ENCODE measurements at regions of chr19 and their contacts with region 1.

Region 1: GRCh38 chr19:796692-797527 is at the start of gene PTBP1:
- DNase-seq: peak; percentile 100
- H3K4me3 Mint-ChIP-seq: peak within 1 kb of the TSS; percentile 88
- H3K27ac Mint-ChIP-seq: peak within 1 kb of the TSS; percentile 88
- H3K4me1 Mint-ChIP-seq: peaks cover 28% of the 10 kb centered on the region
- H3K27me3 Mint-ChIP-seq: no peaks in the 10 kb centered on the region
- total RNA-seq, gene PTBP1: 510 to 532 TPM

Region 2: GRCh38 chr19:506404-507285 is 290.3 kb before region 1 on chr19:
- CTCF ChIA-PET with region 1: no interaction called
- intact Hi-C with region 1: loop called (anchors 1 kb)
- DNase-seq: peak; percentile 96
- H3K4me3 Mint-ChIP-seq: peak overlapping the region; percentile 83
- H3K27ac Mint-ChIP-seq: peak overlapping the region; percentile 99
- H3K4me1 Mint-ChIP-seq: peaks cover 38% of the 10 kb centered on the region
- H3K27me3 Mint-ChIP-seq: no peaks in the 10 kb centered on the region

Region 3: DNA sequence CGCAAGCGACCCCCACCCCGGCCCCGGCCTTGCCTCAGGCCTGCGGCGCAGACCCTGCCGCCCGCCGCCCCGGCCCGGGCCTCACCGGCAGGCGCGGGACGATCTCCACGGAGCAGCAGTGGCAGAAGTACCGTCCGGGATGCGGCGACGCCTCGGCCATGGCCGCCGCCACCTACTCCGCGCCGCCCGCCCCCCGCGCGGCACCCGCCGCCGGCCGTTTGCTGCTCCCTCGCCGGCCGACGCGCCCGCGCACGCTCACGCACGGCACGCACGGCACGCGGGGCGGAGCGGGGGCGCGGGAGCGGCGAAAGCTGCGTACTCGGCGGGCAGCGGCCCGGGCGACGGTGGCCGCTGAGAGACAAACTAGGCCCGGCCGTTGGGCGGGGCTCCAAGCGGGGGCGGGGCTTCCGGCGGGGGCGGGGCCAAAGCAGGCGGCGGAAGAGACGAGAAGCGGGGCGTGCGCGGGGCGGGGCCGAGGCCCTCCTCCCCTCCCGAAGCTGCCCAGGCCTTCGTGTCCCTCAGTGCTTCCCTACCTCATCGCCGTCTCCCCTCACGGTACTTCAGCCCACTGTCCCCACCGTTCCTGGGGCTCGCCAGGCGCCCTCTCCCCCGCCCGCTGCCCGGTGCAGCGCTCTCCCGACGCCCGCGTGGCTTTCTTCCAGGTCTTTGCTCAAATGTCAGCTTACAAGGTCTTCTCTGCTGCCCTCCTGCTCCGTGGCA is 133.8 kb before region 1 on chr19 and contains the start of gene RNF126:
- CTCF ChIA-PET with region 1: no interaction called
- intact Hi-C with region 1: loop called (anchors 1 kb)
- DNase-seq: peak; percentile 95
- H3K4me3 Mint-ChIP-seq: peak within 1 kb of the TSS; percentile 99
- H3K27ac Mint-ChIP-seq: peak within 1 kb of the TSS; percentile 98
- H3K4me1 Mint-ChIP-seq: peaks cover 40% of the 10 kb centered on the region
- H3K27me3 Mint-ChIP-seq: no peaks in the 10 kb centered on the region
- total RNA-seq, gene RNF126: 99.5 to 108 TPM

Region 4: DNA sequence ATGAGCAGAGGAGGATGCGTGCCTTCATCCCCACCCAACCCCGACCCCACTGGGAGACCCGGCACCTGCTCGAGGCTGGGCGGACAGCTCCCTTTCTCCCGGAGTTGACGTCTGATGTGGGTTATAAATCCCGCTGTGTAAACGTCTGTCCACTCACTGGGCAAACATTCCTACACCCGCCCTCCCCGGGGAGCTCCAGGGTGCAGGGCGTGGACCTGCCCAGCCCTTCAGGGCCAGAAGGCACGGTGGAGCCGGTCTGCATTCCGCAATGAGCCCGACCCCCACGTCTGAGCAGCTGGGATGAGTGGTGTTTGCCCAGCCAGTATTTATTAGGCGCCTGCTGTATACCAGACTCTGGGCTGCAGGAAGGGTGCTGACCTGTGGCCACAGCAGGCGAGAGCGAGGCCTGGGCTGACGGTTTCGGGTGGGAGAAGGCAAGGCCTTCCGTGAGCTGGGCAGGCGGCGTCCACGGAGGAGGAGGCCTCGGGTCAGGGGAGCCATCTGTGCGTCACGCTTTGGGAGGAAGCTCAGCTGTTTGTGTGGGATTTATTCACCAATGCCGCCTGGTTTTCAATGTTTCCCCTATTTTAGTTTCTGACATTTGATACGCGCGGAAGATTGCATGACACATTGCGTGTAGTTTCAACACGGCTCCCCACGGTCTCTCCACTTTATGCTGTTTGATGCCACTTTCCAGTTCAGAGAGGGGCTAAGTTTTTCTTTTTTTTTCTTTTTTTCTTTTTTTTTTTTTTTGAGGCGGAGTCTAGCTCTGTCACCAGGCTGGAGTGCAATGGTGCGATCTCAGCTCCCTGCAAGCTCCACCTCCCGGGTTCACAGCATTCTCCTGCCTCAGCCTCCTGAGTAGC is 44.0 kb before region 1 on chr19:
- CTCF ChIA-PET with region 1: no interaction called
- intact Hi-C with region 1: no loop called
- DNase-seq: no peak
- H3K4me3 Mint-ChIP-seq: no peak overlapping the region
- H3K27ac Mint-ChIP-seq: no peak overlapping the region
- H3K4me1 Mint-ChIP-seq: no peaks in the 10 kb centered on the region
- H3K27me3 Mint-ChIP-seq: no peaks in the 10 kb centered on the region

Region 5: DNA sequence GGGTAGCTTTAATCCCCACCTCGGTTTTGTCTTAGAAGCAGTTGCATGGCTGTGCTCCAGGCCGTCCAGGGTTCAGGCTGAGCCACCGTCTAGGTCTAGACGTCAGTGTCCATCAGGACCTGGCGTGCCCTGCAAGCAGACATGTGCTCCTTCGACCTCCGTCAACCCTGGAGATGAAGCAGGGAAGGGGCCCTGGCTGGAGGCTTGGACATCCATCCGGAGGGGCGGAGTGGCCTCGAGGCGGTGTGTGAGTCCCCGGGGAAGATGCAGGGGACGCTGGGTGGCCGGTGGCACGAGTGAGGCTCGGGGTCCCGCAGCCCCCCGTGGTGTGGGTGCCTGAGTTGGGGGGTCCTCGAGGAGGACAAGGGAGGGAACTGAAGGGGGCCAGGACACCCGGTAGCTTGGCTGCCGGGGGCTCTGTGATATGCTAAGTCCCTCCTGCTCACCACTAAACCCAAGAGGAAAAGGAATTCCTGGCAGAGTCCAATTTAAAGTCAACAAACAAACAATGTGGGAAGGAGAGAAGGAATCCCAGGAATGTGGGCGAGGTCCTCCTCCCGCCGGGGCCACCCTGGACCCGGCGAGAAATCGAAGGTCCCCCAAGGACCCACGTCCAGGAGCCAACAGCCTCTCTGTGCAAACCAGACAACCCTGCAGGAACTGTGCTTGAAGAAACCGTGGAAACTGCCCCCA is 14.6 kb before region 1 on chr19:
- CTCF ChIA-PET with region 1: no interaction called
- intact Hi-C with region 1: no loop called
- DNase-seq: no peak
- H3K4me3 Mint-ChIP-seq: no peak overlapping the region
- H3K27ac Mint-ChIP-seq: no peak overlapping the region
- H3K4me1 Mint-ChIP-seq: no peaks in the 10 kb centered on the region
- H3K27me3 Mint-ChIP-seq: no peaks in the 10 kb centered on the region

Region 6: DNA sequence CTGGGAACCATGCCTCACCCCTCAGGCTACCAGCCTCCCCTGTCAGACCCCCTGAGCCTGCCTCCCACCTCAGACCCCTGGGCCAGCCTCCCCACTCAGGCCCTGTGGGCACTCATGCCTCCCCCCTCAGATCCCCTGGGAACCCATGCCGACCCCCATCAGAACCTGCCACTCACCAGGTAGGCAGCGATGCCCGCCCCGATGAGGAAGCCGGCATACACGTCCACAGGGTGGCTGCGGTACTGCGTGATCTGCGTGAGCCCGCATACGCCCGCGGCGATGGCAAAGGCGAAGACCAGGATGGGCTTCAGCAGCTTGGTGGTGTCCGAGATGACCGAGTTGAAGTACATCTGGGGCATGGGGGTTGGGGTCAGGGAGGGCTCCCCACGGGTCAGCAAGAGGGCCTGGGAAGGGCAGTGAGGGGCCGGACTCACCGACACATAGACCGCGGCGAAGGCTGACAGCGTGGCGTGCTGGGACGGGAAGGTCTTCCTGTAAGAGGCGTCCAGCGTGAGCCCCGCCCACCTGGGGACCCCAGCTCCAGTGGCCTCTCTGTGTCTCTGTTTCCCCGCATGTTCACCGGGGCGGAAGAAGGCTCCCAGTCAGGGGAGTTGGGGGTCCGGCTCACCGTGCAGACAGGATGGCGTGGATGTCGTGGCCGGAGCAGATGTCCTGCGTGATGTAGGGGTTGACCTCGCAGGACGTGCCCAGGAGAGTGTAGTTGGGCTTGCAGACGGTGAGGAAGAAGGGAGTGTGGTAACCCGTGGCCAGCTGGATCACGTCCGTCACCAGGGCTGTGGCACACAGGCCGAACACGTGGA is 17.6 kb after region 1 on chr19:
- CTCF ChIA-PET with region 1: no interaction called
- intact Hi-C with region 1: loop called (anchors 1 kb)
- DNase-seq: no peak
- H3K4me3 Mint-ChIP-seq: no peak overlapping the region
- H3K27ac Mint-ChIP-seq: no peak overlapping the region
- H3K4me1 Mint-ChIP-seq: no peaks in the 10 kb centered on the region
- H3K27me3 Mint-ChIP-seq: no peaks in the 10 kb centered on the region

Region 7: GRCh38 chr19:920051-920864 is 123.3 kb after region 1 on chr19:
- CTCF ChIA-PET with region 1: no interaction called
- intact Hi-C with region 1: loop called (anchors 1 kb)
- DNase-seq: peak; percentile 63
- H3K4me3 Mint-ChIP-seq: peak overlapping the region; percentile 74
- H3K27ac Mint-ChIP-seq: peak overlapping the region; percentile 73
- H3K4me1 Mint-ChIP-seq: peaks cover 22% of the 10 kb centered on the region
- H3K27me3 Mint-ChIP-seq: peaks cover 2% of the 10 kb centered on the region

Region 8: GRCh38 chr19:1131738-1132551 is 335.0 kb after region 1 on chr19:
- CTCF ChIA-PET with region 1: no interaction called
- intact Hi-C with region 1: loop called (anchors 1 kb)
- DNase-seq: peak; percentile 97
- H3K4me3 Mint-ChIP-seq: peak overlapping the region; percentile 95
- H3K27ac Mint-ChIP-seq: peak overlapping the region; percentile 97
- H3K4me1 Mint-ChIP-seq: peaks cover 48% of the 10 kb centered on the region
- H3K27me3 Mint-ChIP-seq: no peaks in the 10 kb centered on the region